ENCODE measurements at regions of chr5 and their contacts with region 1.

Region 1: GRCh38 chr5:163867324-163867723 is 361.9 kb downstream of the MAT2B start:
- DNase-seq: no peak
- H3K4me3 ChIP-seq: no peak overlapping the region
- H3K27ac ChIP-seq: no peak overlapping the region
- H3K4me1 ChIP-seq: no peaks in the 10 kb centered on the region
- H3K27me3 ChIP-seq: no peaks in the 10 kb centered on the region
- CTCF ChIP-seq: no peak

Region 2: DNA sequence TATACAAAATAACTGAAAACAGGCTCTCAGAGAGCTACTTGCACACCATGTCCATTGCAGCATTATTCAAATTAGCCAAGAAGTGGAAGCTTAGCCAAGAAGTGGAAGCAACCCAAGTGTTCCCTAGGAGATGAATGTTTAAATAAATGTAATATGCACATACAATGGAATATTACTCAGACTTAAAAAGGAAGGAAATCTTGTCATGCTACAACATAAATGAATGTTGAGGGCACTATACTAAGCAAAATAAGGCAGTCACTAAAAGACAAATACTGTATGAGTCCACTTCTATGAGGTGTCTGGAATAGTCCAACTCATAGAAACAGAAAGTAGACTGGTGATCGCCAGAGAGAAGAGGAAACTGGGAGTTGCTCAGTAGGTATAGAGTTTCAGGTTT is 76.2 kb after region 1 on chr5:
- CTCF ChIA-PET with region 1: no interaction called
- dilution Hi-C with region 1: loop called (anchors 5 kb)
- in situ Hi-C with region 1: no loop called
- intact Hi-C with region 1: no loop called
- DNase-seq: no peak
- H3K4me3 ChIP-seq: no peak overlapping the region
- H3K27ac ChIP-seq: no peak overlapping the region
- H3K4me1 ChIP-seq: no peaks in the 10 kb centered on the region
- H3K27me3 ChIP-seq: peaks cover 2% of the 10 kb centered on the region
- CTCF ChIP-seq: no peak